Common myeloid progenitor, CD34-positive (primary cell): ENCODE measurements at regions of chr7 and their contacts with region 1.

Region 1: DNA sequence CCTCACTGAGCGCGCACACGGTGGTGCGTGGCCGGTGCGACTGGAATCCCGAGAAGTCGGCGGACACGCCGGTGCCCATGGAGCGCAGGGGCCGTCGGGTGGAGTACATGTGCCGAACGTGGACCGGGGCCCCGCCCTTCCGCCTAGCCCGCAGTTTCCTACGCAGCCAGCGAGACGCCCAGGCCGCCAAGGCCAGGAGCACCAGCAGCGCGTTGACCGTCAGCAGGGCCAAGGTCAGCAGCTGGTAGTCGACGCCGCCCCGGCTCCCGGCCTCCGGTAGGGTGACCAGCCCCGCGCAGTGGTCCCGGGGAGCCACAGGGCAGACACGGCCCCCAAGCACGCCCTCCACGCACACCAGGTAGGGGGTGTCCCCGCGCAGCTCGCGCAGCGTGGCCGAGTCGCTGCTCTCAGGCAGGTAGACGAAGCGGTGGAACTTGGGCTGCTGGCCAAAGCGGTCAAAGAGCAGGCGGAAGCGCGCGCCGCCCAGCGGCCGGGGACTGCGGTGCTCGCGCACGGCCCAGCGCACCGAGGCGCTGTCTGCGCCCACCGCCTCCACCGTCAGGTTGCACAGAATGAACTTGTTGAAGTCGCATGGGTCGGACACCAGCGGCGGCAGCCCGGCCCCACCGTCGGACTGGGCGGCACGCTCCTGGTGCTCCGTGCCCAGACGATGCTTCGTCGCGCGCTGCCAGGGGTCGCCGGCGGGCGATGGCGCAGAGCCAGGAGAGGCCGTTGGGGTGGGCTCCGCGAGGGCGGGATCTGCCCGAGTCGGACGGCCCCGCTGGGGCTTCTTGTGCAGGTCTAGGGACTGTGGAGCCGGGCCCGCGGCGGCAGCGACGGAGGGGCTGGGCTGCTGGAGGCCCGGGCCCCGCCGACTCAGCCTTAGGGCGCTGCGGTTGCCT is 2.2 kb downstream of the TRIL start:
- DNase-seq: peak; percentile 40 to 73 (median 68)
- H3K4me3 ChIP-seq: peak overlapping the region; percentile 6 to 74 (median 51)
- H3K27ac ChIP-seq: no peak overlapping the region
- H3K4me1 ChIP-seq: peaks cover 3 to 46% (median 43%) of the 10 kb centered on the region in 4 experiments
- H3K27me3 ChIP-seq: peaks cover 0 to 76% (median 29%) of the 10 kb centered on the region in 5 experiments

Region 2: GRCh38 chr7:28939844-28940544 is 16.0 kb before region 1 on chr7:
- CTCF ChIA-PET with region 1: interaction called, 46 read pairs
- POLR2A ChIA-PET with region 1: no interaction called
- DNase-seq: no peak
- H3K4me3 ChIP-seq: no peak overlapping the region
- H3K27ac ChIP-seq: no peak overlapping the region
- H3K4me1 ChIP-seq: no peaks in the 10 kb centered on the region
- H3K27me3 ChIP-seq: no peaks in the 10 kb centered on the region

Region 3: DNA sequence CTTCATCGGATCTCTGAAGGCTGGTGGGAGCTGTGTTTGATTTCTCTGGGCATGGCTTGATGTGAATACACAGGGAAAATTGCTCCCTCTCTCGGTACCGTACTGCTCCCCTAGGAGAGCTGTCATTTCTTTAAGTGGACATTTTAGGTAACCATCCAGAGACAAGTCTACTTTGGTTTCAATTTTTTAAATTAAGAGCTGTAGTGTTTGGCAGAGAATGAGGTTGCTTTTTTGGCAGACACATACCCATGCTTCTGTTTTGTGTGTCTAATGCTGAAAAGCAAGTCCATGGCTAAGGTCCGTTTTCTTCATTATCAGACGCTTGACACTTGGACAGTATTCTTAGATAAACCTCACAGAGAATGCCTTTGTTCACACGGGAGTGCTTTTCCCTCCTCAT is 63.4 kb after region 1 on chr7:
- CTCF ChIA-PET with region 1: no interaction called
- POLR2A ChIA-PET with region 1: no interaction called
- DNase-seq: no peak
- H3K4me3 ChIP-seq: no peak overlapping the region
- H3K27ac ChIP-seq: no peak overlapping the region
- H3K4me1 ChIP-seq: no peaks in the 10 kb centered on the region
- H3K27me3 ChIP-seq: no peaks in the 10 kb centered on the region

Region 4: DNA sequence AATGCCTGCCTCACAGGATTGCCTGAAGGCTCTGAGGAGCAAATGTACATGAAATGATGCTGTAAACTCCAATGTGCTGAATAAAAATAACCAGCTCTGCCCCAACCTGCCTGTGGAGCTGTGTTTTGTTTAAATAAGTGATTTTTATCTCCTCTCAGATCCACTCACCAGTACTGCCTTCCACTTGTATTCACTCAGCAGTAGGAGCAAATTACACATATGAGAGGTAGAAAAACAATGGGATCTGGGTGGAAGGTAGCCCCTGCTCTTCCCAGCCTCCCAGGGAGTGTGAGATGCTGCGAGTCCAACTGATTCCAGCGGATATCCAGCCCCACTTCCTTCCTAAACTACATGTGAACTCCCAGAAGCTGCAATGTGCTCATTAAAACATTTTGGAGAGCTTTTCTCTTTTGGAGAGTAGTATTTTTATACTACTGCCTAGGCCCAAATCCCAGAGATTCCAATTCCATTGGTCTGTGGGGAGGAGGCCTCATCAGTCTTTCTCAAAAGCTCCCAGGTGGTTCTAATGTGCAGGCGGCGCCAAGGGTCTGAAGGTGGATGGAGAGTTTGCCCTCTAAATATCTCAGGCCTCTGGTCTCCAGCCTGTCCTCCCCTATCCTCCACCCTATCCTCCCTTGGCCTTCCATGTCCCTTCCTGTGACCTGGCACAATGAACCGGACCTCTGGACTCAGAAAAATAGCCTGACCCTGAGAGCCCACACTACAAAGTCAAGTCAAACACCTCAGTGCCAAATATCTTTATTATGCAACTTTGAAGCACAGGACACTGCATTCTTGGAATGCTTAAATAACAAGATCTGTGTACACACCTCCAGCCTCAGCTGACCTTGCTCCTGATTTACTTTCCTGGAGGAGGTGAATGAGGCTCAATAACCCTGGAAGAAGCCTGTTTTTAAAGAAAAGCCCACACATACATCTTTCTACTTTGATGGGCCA is 144.2 kb after region 1 on chr7:
- CTCF ChIA-PET with region 1: interaction called, 17 read pairs
- POLR2A ChIA-PET with region 1: no interaction called
- DNase-seq: no peak
- H3K4me3 ChIP-seq: no peak overlapping the region
- H3K27ac ChIP-seq: no peak overlapping the region
- H3K4me1 ChIP-seq: no peaks in the 10 kb centered on the region
- H3K27me3 ChIP-seq: no peaks in the 10 kb centered on the region

Region 5: GRCh38 chr7:29105752-29106668 is 150.0 kb after region 1 on chr7:
- CTCF ChIA-PET with region 1: interaction called, 22 read pairs
- POLR2A ChIA-PET with region 1: no interaction called
- DNase-seq: peak; percentile 69 to 85 (median 78)
- H3K4me3 ChIP-seq: no peak overlapping the region
- H3K27ac ChIP-seq: no peak overlapping the region
- H3K4me1 ChIP-seq: peaks cover 0 to 19% (median 16%) of the 10 kb centered on the region in 4 experiments
- H3K27me3 ChIP-seq: no peaks in the 10 kb centered on the region